Activated CD4-positive, alpha-beta memory T cell treated with anti-CD3 and anti-CD28 coated beads for 36 hours (primary cell): ENCODE measurements at regions of chr20 and their contacts with region 1.

Region 1: GRCh38 chr20:5100684-5101347 is 18.9 kb downstream of the PCNA start:
- DNase-seq: peak; percentile 82
- H3K4me3 Mint-ChIP-seq: no peak overlapping the region
- H3K27ac Mint-ChIP-seq: peak overlapping the region; percentile 30
- H3K4me1 Mint-ChIP-seq: peaks cover 4% of the 10 kb centered on the region
- H3K27me3 Mint-ChIP-seq: no peaks in the 10 kb centered on the region

Region 2: GRCh38 chr20:4869290-4870193 is 231.3 kb before region 1 on chr20:
- CTCF ChIA-PET with region 1: no interaction called
- POLR2A ChIA-PET with region 1: no interaction called
- intact Hi-C with region 1: loop called (anchors 2 kb)
- DNase-seq: peak; percentile 13
- H3K4me3 Mint-ChIP-seq: no peak overlapping the region
- H3K27ac Mint-ChIP-seq: peak overlapping the region; percentile 66
- H3K4me1 Mint-ChIP-seq: peaks cover 15% of the 10 kb centered on the region
- H3K27me3 Mint-ChIP-seq: no peaks in the 10 kb centered on the region

Region 3: DNA sequence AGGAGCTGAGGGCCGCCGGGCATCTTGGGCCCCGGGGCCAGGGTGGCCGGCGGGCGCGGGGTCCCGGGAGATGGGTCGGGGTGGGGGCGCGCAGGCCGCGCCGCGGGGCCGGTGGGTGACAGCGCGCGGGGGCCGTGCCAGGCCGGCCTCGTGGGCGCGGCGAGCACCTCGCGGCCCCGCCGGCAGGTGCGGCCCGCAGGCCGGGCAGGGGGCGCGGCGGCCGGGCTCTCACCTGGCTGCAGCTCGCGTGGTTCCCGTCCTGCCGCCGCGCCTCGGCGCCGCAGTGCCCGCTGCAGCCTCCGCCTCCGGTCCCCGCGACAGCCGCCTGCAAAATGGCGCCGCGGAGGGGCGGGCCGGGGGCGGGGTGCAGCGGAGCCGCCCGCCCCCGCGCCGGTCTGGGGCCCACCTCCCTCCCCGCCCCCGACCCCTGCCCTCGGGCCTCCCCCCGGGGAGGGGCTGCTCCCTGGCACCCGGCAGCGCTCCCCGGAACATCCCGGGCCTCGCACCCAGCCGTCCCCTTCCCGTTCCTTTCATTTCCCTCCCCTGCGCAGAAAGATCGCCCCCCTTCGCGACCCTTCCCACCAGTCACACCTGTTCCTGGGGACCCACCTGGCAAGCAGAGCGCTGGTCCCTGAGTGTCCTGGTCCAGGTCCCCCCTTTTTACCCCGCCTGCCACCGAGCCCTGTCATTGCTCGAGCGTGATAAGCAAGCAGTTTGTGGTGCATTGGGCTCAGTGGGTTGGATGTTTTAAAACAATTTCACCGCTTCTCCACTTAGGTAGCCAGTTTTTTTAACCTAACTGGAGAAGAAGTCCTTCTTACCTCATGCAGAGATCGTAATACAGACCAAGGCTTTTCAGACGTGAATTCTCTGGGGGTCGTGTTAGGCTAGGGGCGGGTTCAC is 99.4 kb before region 1 on chr20 and contains the start of gene SLC23A2:
- CTCF ChIA-PET with region 1: interaction called, 27 read pairs
- POLR2A ChIA-PET with region 1: no interaction called
- intact Hi-C with region 1: no loop called
- DNase-seq: peak; percentile 65
- H3K4me3 Mint-ChIP-seq: peak within 1 kb of the TSS; percentile 90
- H3K27ac Mint-ChIP-seq: peak within 1 kb of the TSS; percentile 69
- H3K4me1 Mint-ChIP-seq: peaks cover 33% of the 10 kb centered on the region
- H3K27me3 Mint-ChIP-seq: no peaks in the 10 kb centered on the region
- total RNA-seq, gene SLC23A2: 14.0 to 14.9 TPM

Region 4: GRCh38 chr20:5056801-5057599 is 43.8 kb before region 1 on chr20:
- CTCF ChIA-PET with region 1: interaction called, 132 read pairs
- POLR2A ChIA-PET with region 1: no interaction called
- intact Hi-C with region 1: loop called (anchors 1 kb)
- DNase-seq: peak; percentile 82
- H3K4me3 Mint-ChIP-seq: no peak overlapping the region
- H3K27ac Mint-ChIP-seq: peak overlapping the region; percentile 51
- H3K4me1 Mint-ChIP-seq: peaks cover 12% of the 10 kb centered on the region
- H3K27me3 Mint-ChIP-seq: no peaks in the 10 kb centered on the region

Region 5: GRCh38 chr20:5191829-5192569 is 91.2 kb after region 1 on chr20:
- CTCF ChIA-PET with region 1: interaction called, 22 read pairs
- POLR2A ChIA-PET with region 1: interaction called, 3 read pairs
- intact Hi-C with region 1: no loop called
- DNase-seq: peak; percentile 49
- H3K4me3 Mint-ChIP-seq: no peak overlapping the region
- H3K27ac Mint-ChIP-seq: peak overlapping the region; percentile 73
- H3K4me1 Mint-ChIP-seq: peaks cover 24% of the 10 kb centered on the region
- H3K27me3 Mint-ChIP-seq: no peaks in the 10 kb centered on the region